Panc1 (cell line): ENCODE measurements at regions of chr1 and their contacts with region 1.

Region 1: GRCh38 chr1:207355060-207355459 is 33.6 kb downstream of the CD55 start:
- DNase-seq: no peak
- ATAC-seq: no peak
- H3K4me3 ChIP-seq: no peak overlapping the region
- H3K27ac ChIP-seq: no peak overlapping the region
- H3K4me1 ChIP-seq: no peaks in the 10 kb centered on the region
- H3K27me3 ChIP-seq: no peaks in the 10 kb centered on the region
- CTCF ChIP-seq: no peak

Region 2: GRCh38 chr1:207321079-207321789 is 33.8 kb before region 1 on chr1 and contains the start of gene CD55:
- CTCF ChIA-PET with region 1: no interaction called
- POLR2A ChIA-PET with region 1: no interaction called
- in situ Hi-C with region 1: no loop called
- intact Hi-C with region 1: no loop called
- DNase-seq: peak; percentile 98
- ATAC-seq: peak; percentile 96
- H3K4me3 ChIP-seq: peak within 1 kb of the TSS; percentile 68 to 80
- H3K27ac ChIP-seq: peak within 1 kb of the TSS; percentile 57
- H3K4me1 ChIP-seq: no peaks in the 10 kb centered on the region; the same call in 1 of the 2 replicates
- H3K27me3 ChIP-seq: no peaks in the 10 kb centered on the region
- CTCF ChIP-seq: peak; percentile 51
- total RNA-seq, gene CD55: 12.1 TPM

Region 3: GRCh38 chr1:207423560-207424292 is 68.7 kb after region 1 on chr1:
- CTCF ChIA-PET with region 1: no interaction called
- POLR2A ChIA-PET with region 1: interaction called, 10 read pairs
- in situ Hi-C with region 1: no loop called
- intact Hi-C with region 1: no loop called
- DNase-seq: no peak
- ATAC-seq: no peak
- H3K4me3 ChIP-seq: no peak overlapping the region
- H3K27ac ChIP-seq: no peak overlapping the region
- H3K4me1 ChIP-seq: no peaks in the 10 kb centered on the region
- H3K27me3 ChIP-seq: no peaks in the 10 kb centered on the region; the same call in 1 of the 2 replicates
- CTCF ChIP-seq: no peak